Activated T-helper 2 cell treated with anti-CD3 and anti-CD28 coated beads, Interferon-gamma antibody, Interleukin-2, Interleukin-4, amounts not matched to agents 10 μg/mL and 5 μg/mL and 100 μg/mL, durations not matched to agents 14 hours and 24 hours and 36 hours (primary cell): ENCODE measurements at regions of chr12 and their contacts with region 1.

Region 1: DNA sequence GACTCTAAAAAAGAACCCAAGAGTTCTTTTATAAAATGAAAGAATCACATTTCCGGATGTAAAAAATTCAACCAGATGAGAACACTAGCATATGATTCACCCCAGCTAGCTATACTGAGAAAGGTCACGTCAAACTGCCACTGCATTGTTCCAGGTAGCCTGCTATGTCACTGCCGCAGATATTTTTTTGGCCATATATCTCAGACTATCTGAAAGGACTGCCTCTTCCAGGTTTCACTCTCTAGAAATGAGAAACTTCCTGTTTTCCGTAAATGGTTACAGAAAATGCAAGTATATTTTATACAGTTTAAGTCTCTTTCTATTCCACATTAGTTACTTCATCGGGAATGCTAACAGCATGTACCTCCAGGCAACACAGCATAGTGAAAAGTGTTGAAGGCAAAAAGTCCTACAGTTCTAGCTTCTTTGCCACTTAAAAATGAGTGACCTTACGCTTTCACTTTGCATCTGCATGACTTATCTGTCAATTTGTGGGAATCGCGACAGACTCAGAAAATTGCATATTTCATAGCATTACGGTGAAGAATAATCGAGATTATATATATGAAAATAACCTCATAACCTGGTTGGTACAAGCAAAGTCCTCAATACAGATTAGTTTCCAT is 105.2 kb downstream of the MED13L start:
- DNase-seq: peak; percentile 41
- H3K4me3 Mint-ChIP-seq: peak overlapping the region; percentile 83
- H3K27ac Mint-ChIP-seq: peak overlapping the region; percentile 97
- H3K4me1 Mint-ChIP-seq: peaks cover 49% of the 10 kb centered on the region
- H3K27me3 Mint-ChIP-seq: no peaks in the 10 kb centered on the region

Region 2: DNA sequence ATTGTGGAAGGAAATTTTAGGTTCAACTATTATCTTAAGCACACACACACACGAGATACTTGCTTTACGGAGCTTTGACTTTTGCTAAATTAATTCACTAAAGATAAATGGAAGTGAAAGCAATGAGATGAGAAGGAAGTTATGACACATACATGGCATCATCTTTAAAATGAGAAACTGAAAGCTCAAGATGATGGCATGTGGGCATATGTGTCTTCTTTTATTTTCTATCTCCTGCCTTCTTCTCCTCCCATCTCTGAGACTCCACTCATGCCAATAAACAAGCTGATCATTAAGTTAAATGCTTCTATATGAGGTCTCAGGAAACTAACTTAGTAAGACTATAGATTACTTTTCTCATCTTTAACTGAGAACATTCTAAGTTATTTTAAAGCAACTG is 111.6 kb before region 1 on chr12:
- intact Hi-C with region 1: loop called (anchors 5 kb)
- DNase-seq: no peak
- H3K4me3 Mint-ChIP-seq: peak overlapping the region; percentile 75
- H3K27ac Mint-ChIP-seq: peak overlapping the region; percentile 91
- H3K4me1 Mint-ChIP-seq: peaks cover 26% of the 10 kb centered on the region
- H3K27me3 Mint-ChIP-seq: no peaks in the 10 kb centered on the region

Region 3: GRCh38 chr12:116087962-116088361 is 84.4 kb before region 1 on chr12:
- intact Hi-C with region 1: loop called (anchors 2 kb)
- DNase-seq: no peak
- H3K4me3 Mint-ChIP-seq: peak overlapping the region; percentile 40
- H3K27ac Mint-ChIP-seq: peak overlapping the region; percentile 70
- H3K4me1 Mint-ChIP-seq: peaks cover 45% of the 10 kb centered on the region
- H3K27me3 Mint-ChIP-seq: no peaks in the 10 kb centered on the region

Region 4: DNA sequence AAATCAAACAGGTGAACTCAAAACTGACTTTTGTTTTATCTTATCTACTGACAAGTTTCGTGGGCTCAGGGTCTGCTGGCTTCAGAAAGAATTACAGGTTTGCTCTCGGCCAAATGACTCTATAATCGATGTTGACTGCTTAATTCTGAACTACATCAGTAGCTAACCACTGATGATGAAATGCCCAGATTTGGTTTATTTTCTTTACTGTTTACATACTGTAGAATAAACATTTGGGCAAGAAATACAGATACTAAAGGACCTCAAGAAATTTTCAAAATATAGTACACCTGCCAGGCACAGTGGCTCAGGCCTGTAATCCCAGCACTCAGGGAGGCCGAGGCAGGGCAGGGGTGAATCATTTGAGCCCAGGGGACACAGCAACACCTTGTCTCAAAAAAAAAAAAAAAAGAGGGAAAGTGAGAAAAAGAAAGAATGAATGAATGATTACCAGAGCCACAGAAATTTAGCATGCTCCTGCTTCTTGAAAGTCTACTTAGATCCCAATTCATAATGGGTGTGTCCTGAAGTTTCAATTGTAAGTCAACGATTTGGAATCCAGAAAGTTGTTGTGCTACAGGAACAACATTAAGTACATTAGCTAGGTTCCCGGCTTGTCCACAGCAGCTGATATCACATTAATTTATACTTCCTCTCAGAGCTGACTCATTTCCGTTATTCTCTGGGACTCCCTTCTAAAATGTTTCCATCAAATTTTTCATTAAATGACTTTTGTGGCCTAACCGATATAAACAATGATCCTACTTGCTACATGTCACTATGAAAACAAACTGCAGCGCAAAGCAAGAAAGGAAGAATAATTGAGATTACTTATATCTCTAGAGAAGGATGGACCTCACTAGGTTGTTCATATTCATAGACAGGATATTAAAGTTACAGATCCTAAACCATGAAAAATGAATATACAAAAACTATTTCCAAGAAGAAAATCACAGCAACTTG is 29.1 kb before region 1 on chr12:
- intact Hi-C with region 1: loop called (anchors 1 kb)
- DNase-seq: no peak
- H3K4me3 Mint-ChIP-seq: no peak overlapping the region
- H3K27ac Mint-ChIP-seq: peak overlapping the region; percentile 67
- H3K4me1 Mint-ChIP-seq: peaks cover 45% of the 10 kb centered on the region
- H3K27me3 Mint-ChIP-seq: no peaks in the 10 kb centered on the region

Region 5: GRCh38 chr12:116188581-116188980 is 16.2 kb after region 1 on chr12:
- intact Hi-C with region 1: loop called (anchors 2 kb)
- DNase-seq: no peak
- H3K4me3 Mint-ChIP-seq: no peak overlapping the region
- H3K27ac Mint-ChIP-seq: peak overlapping the region; percentile 10
- H3K4me1 Mint-ChIP-seq: peaks cover 47% of the 10 kb centered on the region
- H3K27me3 Mint-ChIP-seq: no peaks in the 10 kb centered on the region

Region 6: DNA sequence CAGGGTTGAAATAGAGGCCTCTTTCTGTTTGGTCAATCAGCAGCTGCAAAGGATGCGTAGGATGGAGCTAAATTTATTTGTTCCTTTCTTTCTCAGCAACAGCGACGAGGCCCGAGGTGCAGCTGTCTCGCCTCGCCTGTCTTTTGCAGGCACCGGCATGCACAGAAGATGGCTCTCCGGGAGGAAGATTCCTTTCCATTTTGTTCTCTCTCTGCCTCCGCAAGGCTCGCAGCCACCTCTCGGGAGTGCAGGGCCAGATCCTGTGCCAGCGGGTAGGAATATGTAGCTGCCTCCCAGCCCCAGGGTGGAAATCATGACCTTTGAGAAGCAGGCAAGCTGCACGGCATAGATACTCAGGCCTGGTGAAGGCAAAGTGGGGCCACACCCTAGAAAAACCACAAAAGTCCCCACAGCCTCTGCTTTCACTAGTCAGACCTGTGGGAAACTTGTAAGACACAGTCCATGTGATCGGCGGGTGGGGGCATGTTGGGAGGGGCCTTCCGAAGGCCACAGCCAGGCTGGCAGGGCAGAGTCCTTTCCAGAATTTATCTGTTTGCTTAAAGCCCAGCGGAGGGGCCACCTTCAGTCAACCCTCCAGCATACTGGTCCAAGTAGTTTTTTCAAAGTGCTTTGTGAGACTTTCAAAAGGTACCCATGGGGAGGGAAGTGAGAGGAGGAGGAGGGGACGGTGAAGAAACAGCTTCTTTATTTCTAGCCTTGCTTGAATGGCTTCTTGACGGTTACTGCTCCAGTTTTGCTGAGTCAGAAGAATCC is 387.0 kb after region 1 on chr12 and contains the start of gene MAP1LC3B2:
- intact Hi-C with region 1: loop called (anchors 5 kb)
- DNase-seq: peak; percentile 86
- H3K4me3 Mint-ChIP-seq: peak within 1 kb of the TSS; percentile 51
- H3K27ac Mint-ChIP-seq: peak within 1 kb of the TSS; percentile 95
- H3K4me1 Mint-ChIP-seq: peaks cover 42% of the 10 kb centered on the region
- H3K27me3 Mint-ChIP-seq: no peaks in the 10 kb centered on the region
- total RNA-seq, gene MAP1LC3B2: 0.37 and 0.60 TPM in 2 replicates